GM12878 (cell line): ENCODE measurements at regions of chr10 and their contacts with region 1.

Region 1: GRCh38 chr10:18104223-18104872 is 35.9 kb upstream of the CACNB2 start:
- DNase-seq: no peak
- ATAC-seq: peak; percentile 60
- H3K4me3 ChIP-seq: no peak overlapping the region
- H3K27ac ChIP-seq: no peak overlapping the region
- H3K4me1 ChIP-seq: no peaks in the 10 kb centered on the region
- H3K27me3 ChIP-seq: no peaks in the 10 kb centered on the region
- CTCF ChIP-seq: peak; percentile 52 to 71 (median 55)
- EP300 ChIP-seq: no peak
- POLR2A ChIP-seq: no peak
- RAD21 ChIP-seq: peak; percentile 60

Region 2: GRCh38 chr10:17805921-17806577 is 298.3 kb before region 1 on chr10:
- CTCF ChIA-PET with region 1: no interaction called
- POLR2A ChIA-PET with region 1: no interaction called
- RAD21 ChIA-PET with region 1: no interaction called
- SMC1A ChIA-PET with region 1: no interaction called
- in situ Hi-C with region 1: no loop called
- intact Hi-C with region 1: loop called (anchors 5 kb)
- DNase-seq: no peak
- ATAC-seq: peak; percentile 98
- H3K4me3 ChIP-seq: no peak overlapping the region
- H3K27ac ChIP-seq: no peak overlapping the region
- H3K4me1 ChIP-seq: no peaks in the 10 kb centered on the region
- H3K27me3 ChIP-seq: peaks cover 0 to 5% of the 10 kb centered on the region in 2 experiments; a peak in 2 of 4 replicates
- CTCF ChIP-seq: peak; percentile 39; a peak in 5 of 6 replicates
- EP300 ChIP-seq: no peak
- POLR2A ChIP-seq: no peak
- RAD21 ChIP-seq: peak; percentile 40

Region 3: DNA sequence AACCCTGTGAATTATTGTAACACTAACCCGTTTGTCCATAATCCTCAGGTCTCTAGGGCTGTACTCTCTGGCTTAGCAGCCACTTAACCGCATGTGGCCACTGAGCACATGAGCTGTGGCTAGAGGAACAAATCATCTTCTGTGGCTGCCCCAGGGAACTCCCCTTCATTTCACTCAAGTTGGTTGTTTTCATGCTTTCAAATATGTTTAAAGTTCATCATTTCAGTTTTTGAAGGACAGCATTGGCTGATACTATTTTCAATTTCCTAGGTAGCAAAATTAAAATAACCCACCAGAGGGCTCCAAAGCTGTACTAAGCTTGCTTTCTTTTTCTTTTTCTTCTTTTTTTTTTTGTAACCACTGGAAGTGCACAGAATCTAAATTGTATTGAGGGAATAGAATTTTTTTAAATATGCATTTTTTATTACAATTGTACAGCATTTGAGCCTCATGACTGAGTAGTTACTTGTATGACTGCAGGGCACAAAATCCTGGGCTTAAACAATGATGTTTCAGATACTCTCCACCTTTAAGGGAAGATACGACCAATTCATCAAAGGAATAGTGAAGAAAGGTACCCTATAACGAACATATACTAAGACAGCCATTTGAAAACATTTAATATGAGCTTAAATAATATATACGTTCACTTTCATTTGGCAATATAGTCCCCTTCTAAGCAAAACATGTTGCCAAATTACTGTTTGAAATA is 256.6 kb before region 1 on chr10:
- CTCF ChIA-PET with region 1: interaction called, 15 read pairs
- POLR2A ChIA-PET with region 1: no interaction called
- RAD21 ChIA-PET with region 1: no interaction called
- SMC1A ChIA-PET with region 1: interaction called, 21 read pairs
- in situ Hi-C with region 1: no loop called
- intact Hi-C with region 1: loop called (anchors 5 kb)
- DNase-seq: no peak
- ATAC-seq: peak; percentile 88
- H3K4me3 ChIP-seq: no peak overlapping the region
- H3K27ac ChIP-seq: no peak overlapping the region
- H3K4me1 ChIP-seq: no peaks in the 10 kb centered on the region
- H3K27me3 ChIP-seq: no peaks in the 10 kb centered on the region; a peak in 1 of 4 replicates
- CTCF ChIP-seq: peak; percentile 14 to 53 (median 38); a peak in 4 of 6 replicates
- EP300 ChIP-seq: no peak
- POLR2A ChIP-seq: no peak
- RAD21 ChIP-seq: peak; percentile 70

Region 4: DNA sequence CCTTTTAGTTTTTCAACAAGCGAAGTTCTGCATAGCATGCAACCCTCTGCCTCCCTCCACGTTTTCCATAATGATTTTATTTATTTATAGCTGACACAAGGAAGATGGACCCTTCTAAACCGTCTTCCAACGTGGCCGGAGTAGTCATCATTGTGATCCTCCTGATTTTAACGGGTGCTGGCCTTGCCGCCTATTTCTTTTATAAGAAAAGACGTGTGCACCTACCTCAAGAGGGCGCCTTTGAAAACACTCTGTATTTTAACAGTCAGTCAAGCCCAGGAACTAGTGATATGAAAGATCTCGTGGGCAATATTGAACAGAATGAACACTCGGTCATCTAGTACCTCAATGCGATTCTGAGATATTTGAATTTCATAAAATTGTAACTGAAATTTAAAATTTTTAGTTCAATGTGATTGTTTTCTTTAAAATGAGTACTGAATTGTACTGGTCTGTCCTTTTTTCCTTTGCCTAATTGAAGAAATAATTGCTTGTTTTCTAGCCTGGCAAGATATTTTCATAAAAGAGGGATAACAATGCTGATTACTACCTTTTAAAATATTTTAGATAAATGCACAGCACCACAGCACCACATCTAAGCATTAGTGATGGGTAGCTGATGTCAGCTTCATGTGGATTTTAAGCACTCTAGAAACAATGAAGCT is 194.1 kb before region 1 on chr10:
- CTCF ChIA-PET with region 1: interaction called, 4 read pairs
- POLR2A ChIA-PET with region 1: no interaction called
- RAD21 ChIA-PET with region 1: interaction called, 4 read pairs
- SMC1A ChIA-PET with region 1: interaction called, 3 read pairs
- in situ Hi-C with region 1: no loop called
- intact Hi-C with region 1: loop called (anchors 1 kb)
- DNase-seq: peak; percentile 2
- ATAC-seq: peak; percentile 85
- H3K4me3 ChIP-seq: no peak overlapping the region
- H3K27ac ChIP-seq: no peak overlapping the region
- H3K4me1 ChIP-seq: no peaks in the 10 kb centered on the region
- H3K27me3 ChIP-seq: no peaks in the 10 kb centered on the region
- CTCF ChIP-seq: peak; percentile 51 to 54 (median 52); a peak in 5 of 6 replicates
- EP300 ChIP-seq: no peak
- POLR2A ChIP-seq: no peak
- RAD21 ChIP-seq: peak; percentile 69

Region 5: GRCh38 chr10:17984056-17984455 is 120.3 kb before region 1 on chr10:
- CTCF ChIA-PET with region 1: no interaction called
- POLR2A ChIA-PET with region 1: no interaction called
- RAD21 ChIA-PET with region 1: interaction called, 3 read pairs
- SMC1A ChIA-PET with region 1: no interaction called
- in situ Hi-C with region 1: no loop called
- intact Hi-C with region 1: loop called (anchors 5 kb)
- DNase-seq: peak; percentile 55
- ATAC-seq: peak; percentile 92
- H3K4me3 ChIP-seq: no peak overlapping the region
- H3K27ac ChIP-seq: no peak overlapping the region
- H3K4me1 ChIP-seq: no peaks in the 10 kb centered on the region
- H3K27me3 ChIP-seq: no peaks in the 10 kb centered on the region
- CTCF ChIP-seq: no peak
- EP300 ChIP-seq: peak; percentile 63 to 79; a peak in 3 of 4 replicates
- POLR2A ChIP-seq: no peak
- RAD21 ChIP-seq: no peak